ENCODE measurements at regions of chr19 and their contacts with region 1.

Region 1: DNA sequence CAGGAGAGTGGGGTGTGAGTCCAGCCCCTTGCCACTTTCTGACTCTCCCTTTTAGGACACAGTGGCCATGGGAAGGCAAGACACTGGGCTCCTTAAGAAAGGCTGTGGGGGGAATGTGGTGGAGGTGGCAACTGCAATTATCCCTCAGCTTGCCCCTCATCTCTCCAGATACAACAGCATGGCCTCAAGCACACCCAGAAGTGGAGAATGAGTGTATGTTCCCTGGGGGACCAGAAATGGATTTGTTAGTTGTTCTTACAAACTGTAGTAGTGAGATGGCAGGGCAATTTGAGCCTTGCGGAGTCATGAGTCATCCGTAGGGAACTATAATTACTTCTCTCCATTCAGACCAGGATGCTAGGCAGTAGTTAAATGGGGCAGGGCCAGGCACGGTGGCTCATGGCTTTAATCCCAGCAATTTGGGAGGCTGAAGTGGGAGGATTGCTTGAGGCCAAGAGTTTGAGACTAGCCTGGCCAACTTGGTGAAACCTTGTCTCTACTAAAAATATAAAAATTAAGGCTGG is 25.6 kb upstream of the CXCL17 start:
- DNase-seq: no peak
- H3K4me3 Mint-ChIP-seq: no peak overlapping the region
- H3K27ac Mint-ChIP-seq: no peak overlapping the region
- H3K4me1 Mint-ChIP-seq: peaks cover 29% of the 10 kb centered on the region
- H3K27me3 Mint-ChIP-seq: peaks cover 4% of the 10 kb centered on the region

Region 2: GRCh38 chr19:42450314-42450934 is 17.9 kb before region 1 on chr19:
- intact Hi-C with region 1: loop called (anchors 1 kb)
- DNase-seq: peak; percentile 77
- H3K4me3 Mint-ChIP-seq: no peak overlapping the region
- H3K27ac Mint-ChIP-seq: no peak overlapping the region
- H3K4me1 Mint-ChIP-seq: peaks cover 26% of the 10 kb centered on the region
- H3K27me3 Mint-ChIP-seq: no peaks in the 10 kb centered on the region

Region 3: DNA sequence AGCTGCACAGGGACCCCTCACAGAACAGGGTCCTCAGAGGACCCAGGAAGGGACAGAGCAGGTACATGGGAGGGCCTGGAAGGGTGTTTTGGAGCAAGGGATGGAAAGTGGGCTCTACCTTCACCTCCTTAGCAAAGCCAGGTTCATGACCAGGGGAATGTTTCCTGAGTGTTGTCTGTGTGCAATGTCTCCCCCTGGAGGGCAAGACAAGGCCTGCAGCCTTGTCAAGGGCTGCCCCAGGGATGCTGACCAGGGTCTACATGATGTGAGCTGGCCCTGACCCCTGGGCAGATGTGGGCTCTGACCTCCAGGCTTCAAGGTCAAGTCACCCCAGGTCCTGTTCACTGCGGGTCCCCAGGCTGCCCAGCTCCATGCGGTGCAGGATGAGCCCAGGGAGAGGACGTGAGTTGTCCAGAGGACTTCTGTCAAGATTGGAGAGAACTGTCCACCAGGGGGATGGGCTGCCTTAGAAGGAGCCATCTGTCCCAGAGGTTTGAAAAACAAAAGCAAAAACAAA is 61.0 kb after region 1 on chr19:
- intact Hi-C with region 1: loop called (anchors 5 kb)
- DNase-seq: peak; percentile 61
- H3K4me3 Mint-ChIP-seq: peak overlapping the region; percentile 90
- H3K27ac Mint-ChIP-seq: peak overlapping the region; percentile 95
- H3K4me1 Mint-ChIP-seq: peaks cover 38% of the 10 kb centered on the region
- H3K27me3 Mint-ChIP-seq: no peaks in the 10 kb centered on the region